ENCODE measurements at regions of chr16 and their contacts with region 1.

Region 1: DNA sequence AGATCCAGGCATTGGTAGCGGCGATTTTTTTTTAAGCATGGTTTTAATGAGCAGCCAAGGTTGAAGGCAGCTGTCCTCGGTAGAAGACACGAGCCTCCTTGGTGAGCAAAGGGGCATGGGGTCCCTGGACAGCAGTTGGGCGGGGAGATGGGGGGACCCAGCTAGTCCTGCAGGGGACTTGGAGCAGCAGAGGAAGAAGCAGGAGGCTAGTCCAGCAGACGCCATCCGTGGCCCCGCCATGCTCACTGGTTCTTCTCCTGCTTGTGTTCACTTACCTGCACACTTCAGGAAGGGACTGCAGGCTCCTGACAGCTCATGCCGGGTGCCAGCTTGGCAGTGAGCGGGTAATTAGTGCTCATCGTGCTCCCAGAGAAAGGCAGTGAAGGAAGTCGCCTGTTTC is 130.2 kb upstream of the CDH5 start:
- DNase-seq: no peak

Region 2: DNA sequence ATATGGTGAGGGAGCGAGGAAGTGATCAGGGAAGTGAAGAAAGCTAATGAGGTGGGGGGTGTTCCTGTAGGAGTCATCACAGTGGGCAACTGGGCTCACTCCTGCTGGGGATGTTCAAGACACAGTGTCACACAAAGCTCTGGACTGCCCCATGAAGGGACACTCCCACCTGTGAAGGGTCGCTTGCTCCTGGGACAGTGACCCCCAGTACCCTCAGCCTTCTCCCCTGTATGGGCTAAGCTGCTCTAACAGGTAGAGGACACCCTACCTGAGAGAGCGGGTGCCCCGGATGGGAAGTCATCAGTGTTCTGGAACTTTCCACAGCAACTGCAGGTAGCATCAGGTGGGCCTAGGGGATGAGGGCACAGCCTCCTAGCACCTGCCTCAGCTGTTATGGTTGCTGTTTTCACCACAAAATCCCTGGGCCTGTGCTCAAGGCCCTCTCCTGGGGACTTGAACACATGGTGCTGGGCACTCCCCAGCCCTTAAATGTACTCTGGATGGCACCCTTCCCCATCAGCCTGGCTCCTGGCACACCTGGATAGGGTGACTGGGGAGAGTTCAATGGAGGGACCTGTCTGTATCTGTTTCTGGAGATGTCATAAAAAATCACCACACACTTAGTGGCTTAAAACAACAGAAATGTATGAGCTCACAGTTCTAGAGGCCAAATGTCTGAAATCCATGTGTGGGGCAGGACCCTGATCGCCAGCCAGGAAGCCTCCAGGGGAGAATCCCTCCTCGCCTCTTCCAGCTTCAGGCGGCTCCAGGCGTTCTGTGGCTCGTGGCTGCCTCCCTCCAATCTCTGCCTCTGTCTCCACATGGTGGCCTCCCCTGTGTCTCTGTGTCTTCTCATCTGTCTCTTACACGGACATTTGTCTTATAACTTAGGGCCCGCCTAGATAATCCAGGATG is 26.2 kb after region 1 on chr16:
- intact Hi-C with region 1: loop called in 1 of 2 experiments (anchors 1 kb)
- DNase-seq: peak; percentile 88

Measured in posterior vena cava (tissue), 2 donors.